ENCODE measurements at regions of chr16 and their contacts with region 1.

Region 1: GRCh38 chr16:68328151-68328859 is 17.5 kb downstream of the PRMT7 start:
- DNase-seq: peak; percentile 86
- H3K4me3 ChIP-seq: no peak overlapping the region; a peak in 1 of 4 replicates
- H3K27ac ChIP-seq: no peak overlapping the region
- H3K4me1 ChIP-seq: peaks cover 0 to 17% of the 10 kb centered on the region in 2 experiments; a peak in 1 of 4 replicates
- H3K27me3 ChIP-seq: no peaks in the 10 kb centered on the region
- CTCF ChIP-seq: peak; percentile 85
- EP300 ChIP-seq: no peak
- RAD21 ChIP-seq: peak; percentile 91

Region 2: DNA sequence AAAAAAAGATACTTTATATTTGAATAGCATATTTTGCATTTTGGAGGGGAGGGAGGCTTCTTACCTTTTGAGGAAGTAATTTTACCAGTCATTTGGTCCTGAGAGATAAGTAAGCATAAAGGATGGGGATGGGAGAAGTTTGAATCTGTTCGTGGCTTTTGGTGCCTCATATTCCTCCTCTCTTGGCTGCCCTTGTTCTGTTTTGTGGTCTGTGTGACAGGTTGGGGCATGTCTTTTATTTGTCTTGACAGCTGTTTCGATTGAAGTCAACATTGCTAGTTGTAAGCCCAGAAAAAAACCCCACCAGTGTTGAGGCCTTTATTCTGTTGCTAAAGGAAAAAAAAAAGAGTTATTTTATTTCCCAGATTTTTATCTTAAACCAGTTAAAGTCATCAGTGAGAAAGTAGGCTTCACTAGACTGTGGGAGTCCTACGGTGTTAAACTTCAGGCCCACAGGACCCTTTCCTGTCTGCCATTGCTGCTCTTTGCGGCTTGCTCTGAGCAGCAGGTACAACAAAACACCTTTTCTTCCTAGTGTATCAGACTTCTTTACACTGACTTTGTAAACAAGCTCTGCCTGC is 52.6 kb before region 1 on chr16:
- CTCF ChIA-PET with region 1: interaction called, 355 read pairs
- POLR2A ChIA-PET with region 1: no interaction called
- DNase-seq: no peak
- H3K4me3 ChIP-seq: no peak overlapping the region
- H3K27ac ChIP-seq: peak overlapping the region; percentile 20 to 40
- H3K4me1 ChIP-seq: no peaks in the 10 kb centered on the region; a peak in 1 of 4 replicates
- H3K27me3 ChIP-seq: no peaks in the 10 kb centered on the region
- CTCF ChIP-seq: no peak
- EP300 ChIP-seq: no peak
- RAD21 ChIP-seq: no peak

Region 3: DNA sequence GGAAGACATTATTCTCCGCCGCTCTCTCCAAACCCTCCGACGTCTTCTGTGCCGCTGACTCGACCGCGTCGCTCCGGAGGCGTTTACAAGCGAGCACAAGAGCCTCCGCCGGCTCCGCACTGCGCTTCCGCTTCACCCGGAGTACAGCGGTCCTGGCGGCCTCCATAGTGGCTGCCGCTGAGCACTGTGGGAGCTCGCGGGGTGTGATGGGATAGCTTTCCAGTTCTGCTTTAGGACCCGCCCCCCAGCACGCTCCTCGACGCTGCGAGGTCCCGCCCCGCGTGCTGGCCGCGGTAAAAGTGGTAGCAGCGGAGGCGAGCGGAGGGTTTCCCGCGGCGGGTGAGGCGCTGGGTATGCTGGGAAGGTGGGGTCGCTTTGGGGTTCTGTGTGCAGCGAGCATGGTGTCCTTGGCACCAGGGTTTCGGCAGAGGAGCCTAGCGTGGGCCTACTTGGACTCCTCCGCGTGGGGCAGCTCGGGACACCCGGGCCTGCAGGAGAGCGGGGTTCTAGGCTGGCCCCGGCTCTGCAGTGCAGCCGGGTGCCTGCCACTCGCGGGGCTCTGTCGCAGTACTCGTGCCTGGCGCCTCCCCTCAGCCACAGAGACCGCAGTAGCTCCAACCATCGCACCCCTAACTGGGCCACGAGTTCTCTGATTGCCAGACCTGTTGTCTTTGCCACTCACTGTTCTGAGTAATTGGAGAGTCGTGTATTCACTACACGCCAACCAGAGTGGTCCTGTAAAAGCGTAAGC is 17.4 kb before region 1 on chr16 and contains the starts of genes PRMT7 and SLC7A6OS:
- CTCF ChIA-PET with region 1: interaction called, 15 read pairs
- POLR2A ChIA-PET with region 1: interaction called, 4 read pairs
- DNase-seq: peak; percentile 98
- H3K4me3 ChIP-seq: peak within 1 kb of the TSS; percentile 83 to 87
- H3K27ac ChIP-seq: peak within 1 kb of the TSS; percentile 66 to 76
- H3K4me1 ChIP-seq: peaks cover 10 to 14% of the 10 kb centered on the region in 2 experiments; a peak in 2 of 4 replicates
- H3K27me3 ChIP-seq: no peaks in the 10 kb centered on the region
- CTCF ChIP-seq: no peak
- EP300 ChIP-seq: no peak
- RAD21 ChIP-seq: no peak
- polyA plus RNA-seq, gene PRMT7: 46.0 and 66.8 TPM in 2 replicates
- polyA plus RNA-seq, gene SLC7A6OS: 6.6 and 9.6 TPM in 2 replicates

Region 4: DNA sequence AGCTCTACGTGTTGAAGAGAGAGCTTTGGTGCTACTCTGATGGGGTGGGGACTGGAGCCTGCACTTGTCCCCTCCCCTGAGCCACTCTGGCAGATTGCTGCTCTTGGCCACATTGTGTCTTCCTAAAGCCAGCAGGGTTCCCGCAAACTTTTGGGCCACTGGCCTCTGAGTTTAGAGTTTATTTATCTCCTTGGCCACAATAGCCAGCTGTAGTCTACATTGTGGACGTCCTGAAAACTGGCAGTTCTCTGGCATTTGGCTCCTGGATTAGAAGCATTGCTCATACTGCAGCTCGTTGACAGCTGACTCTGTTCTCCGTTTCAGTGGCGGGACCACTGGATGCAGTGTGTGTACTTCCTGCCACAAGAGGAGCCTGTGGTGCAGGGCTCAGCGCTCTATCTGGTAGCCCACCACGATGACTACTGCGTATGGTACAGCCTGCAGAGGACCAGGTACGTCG is 17.1 kb after region 1 on chr16:
- CTCF ChIA-PET with region 1: interaction called, 15 read pairs
- POLR2A ChIA-PET with region 1: no interaction called
- DNase-seq: no peak
- H3K4me3 ChIP-seq: no peak overlapping the region
- H3K27ac ChIP-seq: no peak overlapping the region
- H3K4me1 ChIP-seq: no peaks in the 10 kb centered on the region
- H3K27me3 ChIP-seq: no peaks in the 10 kb centered on the region
- CTCF ChIP-seq: no peak
- EP300 ChIP-seq: no peak
- RAD21 ChIP-seq: no peak

Region 5: DNA sequence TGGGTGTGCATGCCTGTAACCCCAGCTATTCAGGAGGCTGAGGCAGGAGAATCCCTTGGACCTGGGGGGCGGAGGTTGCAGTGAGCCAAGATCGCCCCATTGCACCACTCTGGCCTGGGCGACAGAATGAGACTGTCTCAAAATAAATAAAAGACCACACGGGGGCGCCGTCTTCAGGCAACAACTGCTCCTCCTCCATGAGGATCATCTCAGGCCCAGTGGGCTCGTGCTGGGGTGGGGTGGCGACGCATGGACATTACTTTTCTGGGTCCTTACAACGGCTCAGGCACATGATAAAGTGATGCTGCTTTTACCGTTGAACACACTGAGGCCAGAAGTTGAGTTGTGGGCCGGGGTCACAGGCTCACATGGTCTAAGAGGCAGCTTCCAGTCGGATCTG is 38.7 kb after region 1 on chr16:
- CTCF ChIA-PET with region 1: interaction called, 12 read pairs
- POLR2A ChIA-PET with region 1: no interaction called
- DNase-seq: peak; percentile 74
- H3K4me3 ChIP-seq: no peak overlapping the region
- H3K27ac ChIP-seq: no peak overlapping the region
- H3K4me1 ChIP-seq: peaks cover 0 to 54% of the 10 kb centered on the region in 2 experiments; a peak in 2 of 4 replicates
- H3K27me3 ChIP-seq: no peaks in the 10 kb centered on the region
- CTCF ChIP-seq: peak; percentile 54
- EP300 ChIP-seq: no peak
- RAD21 ChIP-seq: peak; percentile 51

Measured in SK-N-SH (cell line).